GM10248 (cell line): ENCODE measurements at regions of chr16 and their contacts with region 1.

Region 1: GRCh38 chr16:3443108-3444031 is at the starts of genes NAA60 and ZNF597:
- DNase-seq: peak; percentile 89
- CTCF ChIP-seq: no peak

Region 2: DNA sequence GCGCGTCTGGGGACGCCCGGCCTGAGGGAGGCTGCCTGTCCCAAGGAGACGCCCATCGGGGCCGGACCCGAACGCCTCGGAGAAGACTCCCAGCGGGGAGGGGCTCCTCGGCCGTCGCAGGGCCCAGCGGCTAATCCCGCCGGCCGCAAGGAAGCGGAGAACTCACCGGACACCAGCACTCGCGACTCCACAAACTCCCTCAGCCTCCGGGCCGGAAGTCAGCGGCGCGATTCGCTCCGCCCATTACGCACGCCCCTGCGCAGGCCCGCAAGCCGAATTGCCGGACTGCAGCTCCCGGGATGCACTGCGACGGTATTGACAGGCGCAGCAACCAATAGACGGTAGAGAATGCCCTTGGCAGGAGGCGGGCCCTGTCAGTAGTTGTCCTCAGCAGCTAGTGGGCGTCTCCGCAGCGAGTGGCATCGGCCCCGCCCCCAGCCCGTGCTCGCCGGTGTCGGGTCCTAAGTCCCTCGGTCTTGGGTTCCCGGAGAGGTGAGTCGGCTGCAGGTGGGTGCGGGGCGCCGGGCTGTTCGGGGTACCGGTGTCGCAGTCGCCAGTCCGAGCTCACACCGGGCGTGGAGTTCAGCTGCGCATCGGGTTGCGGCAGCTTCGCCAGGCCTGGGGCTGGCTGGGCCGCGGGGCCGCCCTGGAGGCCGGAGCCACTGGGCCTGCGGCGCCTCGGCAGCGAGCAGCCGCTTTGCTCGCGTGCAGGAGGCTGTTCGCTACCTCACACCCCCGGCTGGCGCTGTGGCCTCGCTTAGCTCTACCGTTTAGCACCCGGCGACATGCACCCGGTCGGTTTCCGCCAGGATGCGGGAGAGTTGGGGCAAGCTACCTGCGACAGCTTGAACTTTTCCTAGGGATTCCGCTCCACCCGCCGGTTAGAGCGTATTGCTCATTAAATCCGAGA is 42.3 kb before region 1 on chr16 and contains the starts of genes ZNF174 and ZSCAN32:
- CTCF ChIA-PET with region 1: interaction called, 5 read pairs
- POLR2A ChIA-PET with region 1: interaction called, 11 read pairs
- DNase-seq: peak; percentile 100
- CTCF ChIP-seq: peak; percentile 8

Region 3: GRCh38 chr16:3457434-3458252 is 14.3 kb after region 1 on chr16:
- CTCF ChIA-PET with region 1: interaction called, 6 read pairs
- POLR2A ChIA-PET with region 1: interaction called, 13 read pairs
- DNase-seq: peak; percentile 99
- CTCF ChIP-seq: peak; percentile 60